Cardiac septum (tissue), 1 donor: ENCODE measurements at regions of chr1 and their contacts with region 1.

Region 1: DNA sequence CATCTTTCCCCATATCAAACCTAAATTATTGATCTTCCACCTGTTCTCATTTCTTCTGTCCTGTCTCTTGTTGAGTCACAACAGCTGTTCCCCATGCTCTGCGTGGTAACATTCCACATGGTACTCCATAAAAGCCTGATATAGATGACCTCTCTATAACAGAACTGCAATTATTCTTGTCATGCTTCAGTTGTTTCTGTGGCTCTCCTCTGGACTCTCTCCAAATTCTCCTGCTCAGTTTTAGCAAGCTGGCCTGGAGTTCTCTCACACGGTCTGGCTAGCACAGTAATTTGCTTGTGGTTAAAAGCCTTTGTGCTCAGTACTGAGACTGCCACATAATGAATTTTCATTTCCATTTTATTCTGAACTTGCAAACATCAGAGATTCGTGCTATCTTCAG is 10.6 kb upstream of the LRRC39 start:
- DNase-seq: no peak

Region 2: GRCh38 chr1:100168051-100168450 is 20.6 kb before region 1 on chr1:
- intact Hi-C with region 1: loop called (anchors 2 kb)
- DNase-seq: no peak

Region 3: DNA sequence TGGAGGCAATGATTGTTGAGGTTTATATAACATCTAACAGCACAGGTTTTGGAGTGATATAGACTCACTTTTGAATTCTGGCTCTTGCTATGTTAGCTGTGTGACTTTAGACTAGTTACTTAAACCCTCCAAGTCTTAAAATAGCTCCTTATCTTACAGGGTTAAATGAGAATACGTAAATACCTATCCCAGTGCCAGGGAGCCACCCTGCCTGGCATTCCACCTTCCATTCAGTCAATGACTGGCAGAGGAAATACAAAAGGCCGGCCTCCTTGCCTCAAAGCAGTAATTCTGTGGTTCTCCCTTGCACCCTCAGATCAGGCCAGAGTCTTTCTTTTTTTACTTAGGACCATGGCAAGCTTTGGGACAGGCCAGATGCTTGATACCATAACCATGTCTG is 29.2 kb after region 1 on chr1:
- intact Hi-C with region 1: loop called (anchors 1 kb)
- DNase-seq: no peak